Naive thymus-derived CD4-positive, alpha-beta T cell (primary cell): ENCODE measurements at regions of chr1 and their contacts with region 1.

Region 1: GRCh38 chr1:200302192-200302920 is 107.5 kb downstream of the ZNF281 start:
- DNase-seq: peak; percentile 57 to 81 (median 74)
- ATAC-seq: peak; percentile 97
- H3K4me3 ChIP-seq: peak overlapping the region; percentile 95
- H3K4me3 Mint-ChIP-seq: peak overlapping the region; percentile 84 to 95 (median 94)
- H3K27ac ChIP-seq: peak overlapping the region; percentile 74
- H3K27ac Mint-ChIP-seq: peak overlapping the region; percentile 59 to 97 (median 93)
- H3K4me1 ChIP-seq: peaks cover 12 to 15% of the 10 kb centered on the region in 2 donors
- H3K4me1 Mint-ChIP-seq: peaks cover 4 to 42% (median 22%) of the 10 kb centered on the region in 7 donors
- H3K27me3 ChIP-seq: no peaks in the 10 kb centered on the region
- H3K27me3 Mint-ChIP-seq: peaks cover 0 to 37% (median 0%) of the 10 kb centered on the region in 5 donors

Region 2: GRCh38 chr1:199353906-199354305 is 948.5 kb before region 1 on chr1:
- CTCF ChIA-PET with region 1: no interaction called
- POLR2A ChIA-PET with region 1: no interaction called
- intact Hi-C with region 1: no loop called
- DNase-seq: no peak
- ATAC-seq: no peak
- H3K4me3 ChIP-seq: no peak overlapping the region
- H3K4me3 Mint-ChIP-seq: no peak overlapping the region
- H3K27ac ChIP-seq: no peak overlapping the region
- H3K27ac Mint-ChIP-seq: no peak overlapping the region
- H3K4me1 ChIP-seq: no peaks in the 10 kb centered on the region
- H3K4me1 Mint-ChIP-seq: no peaks in the 10 kb centered on the region
- H3K27me3 ChIP-seq: no peaks in the 10 kb centered on the region
- H3K27me3 Mint-ChIP-seq: peaks cover 1 to 15% (median 4%) of the 10 kb centered on the region in 5 donors

Region 3: DNA sequence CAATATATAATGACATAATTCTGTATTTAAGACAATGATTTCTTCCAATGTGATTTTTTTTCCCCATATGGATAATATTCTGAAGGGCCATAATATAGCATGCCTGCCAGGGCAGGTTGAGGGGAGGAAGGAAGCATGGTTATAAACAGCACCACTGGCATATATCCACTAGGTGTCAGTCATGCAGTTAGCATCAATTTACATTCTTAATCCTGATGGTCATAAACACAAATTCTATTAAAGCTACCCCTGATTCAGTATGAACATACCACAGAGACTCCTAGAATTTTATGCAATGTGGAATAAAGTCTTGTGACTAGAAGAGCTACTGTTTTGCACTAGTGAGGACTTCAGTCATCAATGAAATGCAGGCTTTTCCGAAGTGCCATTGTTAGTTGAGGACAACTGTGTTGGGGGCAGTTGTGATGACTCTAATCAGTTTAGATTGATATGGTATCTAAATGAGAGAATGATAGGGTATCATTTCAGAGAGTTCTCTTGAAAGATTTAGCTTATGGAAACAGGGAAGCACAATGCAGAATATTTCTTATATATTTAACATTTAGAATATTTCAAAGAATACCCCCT is 617.6 kb before region 1 on chr1:
- CTCF ChIA-PET with region 1: interaction called, 3 read pairs
- POLR2A ChIA-PET with region 1: no interaction called
- intact Hi-C with region 1: loop called (anchors 1 to 2 kb)
- DNase-seq: peak in 7 of 9 donors; percentile 7 to 38 (median 28)
- ATAC-seq: peak; percentile 85
- H3K4me3 ChIP-seq: no peak overlapping the region
- H3K4me3 Mint-ChIP-seq: no peak overlapping the region
- H3K27ac ChIP-seq: no peak overlapping the region
- H3K27ac Mint-ChIP-seq: no peak overlapping the region
- H3K4me1 ChIP-seq: no peaks in the 10 kb centered on the region
- H3K4me1 Mint-ChIP-seq: no peaks in the 10 kb centered on the region
- H3K27me3 ChIP-seq: no peaks in the 10 kb centered on the region
- H3K27me3 Mint-ChIP-seq: peaks cover 7 to 33% (median 8%) of the 10 kb centered on the region in 5 donors

Region 4: DNA sequence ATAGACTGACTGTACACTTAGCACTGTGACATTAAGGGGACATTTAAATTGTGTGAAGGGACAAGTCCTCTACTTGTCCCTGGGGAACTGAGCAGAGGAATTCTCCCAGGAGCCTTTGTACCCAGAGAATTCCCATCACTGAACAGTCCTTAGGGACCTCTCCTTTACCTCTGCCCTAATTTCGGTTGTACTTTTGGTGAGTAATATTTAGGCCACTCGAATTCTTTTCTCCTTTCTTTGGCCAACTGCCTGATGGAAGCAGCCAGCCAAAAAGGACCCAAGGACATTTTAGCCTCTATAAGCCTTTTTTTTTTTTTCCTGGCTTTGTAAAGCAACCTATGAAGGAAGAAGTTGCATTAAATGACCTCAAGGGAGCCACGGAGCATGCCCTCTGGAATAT is 203.3 kb before region 1 on chr1:
- CTCF ChIA-PET with region 1: no interaction called
- POLR2A ChIA-PET with region 1: no interaction called
- intact Hi-C with region 1: loop called in 1 of 2 experiments (anchors 1 kb)
- DNase-seq: no peak
- ATAC-seq: no peak
- H3K4me3 ChIP-seq: no peak overlapping the region
- H3K4me3 Mint-ChIP-seq: no peak overlapping the region
- H3K27ac ChIP-seq: no peak overlapping the region
- H3K27ac Mint-ChIP-seq: no peak overlapping the region
- H3K4me1 ChIP-seq: no peaks in the 10 kb centered on the region
- H3K4me1 Mint-ChIP-seq: peaks cover 0 to 4% (median 0%) of the 10 kb centered on the region in 7 donors
- H3K27me3 ChIP-seq: no peaks in the 10 kb centered on the region
- H3K27me3 Mint-ChIP-seq: peaks cover 0 to 18% (median 0%) of the 10 kb centered on the region in 5 donors

Region 5: DNA sequence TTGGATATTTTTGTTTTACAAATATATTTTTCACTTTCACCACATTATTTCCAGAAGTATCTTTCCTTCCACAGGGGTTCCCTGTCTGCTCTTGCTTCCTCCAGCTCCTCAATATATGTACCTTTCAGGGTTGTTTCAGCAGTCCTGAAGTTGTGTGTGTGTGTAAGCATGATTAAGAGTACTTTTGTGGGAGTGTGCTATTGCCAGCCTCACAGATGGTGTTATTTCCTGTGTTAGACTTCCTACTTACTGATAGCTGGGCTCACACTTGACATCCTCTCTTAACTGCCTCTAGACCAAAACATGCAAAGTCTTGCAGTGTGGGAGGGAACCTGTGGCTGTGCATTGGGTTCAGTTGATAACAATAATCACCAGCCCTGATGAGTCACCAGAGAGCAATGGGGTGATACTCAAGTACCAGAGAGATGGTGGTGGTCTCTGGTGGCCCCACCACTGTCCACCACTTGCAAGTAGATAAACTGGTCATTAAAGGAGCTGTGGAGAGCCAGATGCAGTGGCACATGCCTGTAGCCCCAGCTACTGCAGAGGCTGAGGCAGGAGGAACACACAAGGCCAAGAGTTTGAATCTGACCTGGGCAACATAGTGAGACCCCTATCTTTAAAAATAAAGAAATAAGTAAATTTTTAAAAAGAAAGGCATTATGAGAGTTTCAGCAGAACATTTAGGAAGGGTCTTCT is 148.1 kb before region 1 on chr1:
- CTCF ChIA-PET with region 1: interaction called, 3 read pairs
- POLR2A ChIA-PET with region 1: interaction called, 3 read pairs
- intact Hi-C with region 1: loop called (anchors 5 kb)
- DNase-seq: peak in 8 of 9 donors; percentile 26 to 65 (median 50)
- ATAC-seq: peak; percentile 88
- H3K4me3 ChIP-seq: no peak overlapping the region
- H3K4me3 Mint-ChIP-seq: peak overlapping the region; percentile 45 to 87 (median 67)
- H3K27ac ChIP-seq: peak overlapping the region; percentile 64
- H3K27ac Mint-ChIP-seq: peak overlapping the region; percentile 74 to 99 (median 89)
- H3K4me1 ChIP-seq: peaks cover 27 to 30% of the 10 kb centered on the region in 2 donors
- H3K4me1 Mint-ChIP-seq: peaks cover 18 to 54% (median 29%) of the 10 kb centered on the region in 7 donors
- H3K27me3 ChIP-seq: no peaks in the 10 kb centered on the region
- H3K27me3 Mint-ChIP-seq: peaks cover 0 to 2% (median 0%) of the 10 kb centered on the region in 5 donors

Region 6: DNA sequence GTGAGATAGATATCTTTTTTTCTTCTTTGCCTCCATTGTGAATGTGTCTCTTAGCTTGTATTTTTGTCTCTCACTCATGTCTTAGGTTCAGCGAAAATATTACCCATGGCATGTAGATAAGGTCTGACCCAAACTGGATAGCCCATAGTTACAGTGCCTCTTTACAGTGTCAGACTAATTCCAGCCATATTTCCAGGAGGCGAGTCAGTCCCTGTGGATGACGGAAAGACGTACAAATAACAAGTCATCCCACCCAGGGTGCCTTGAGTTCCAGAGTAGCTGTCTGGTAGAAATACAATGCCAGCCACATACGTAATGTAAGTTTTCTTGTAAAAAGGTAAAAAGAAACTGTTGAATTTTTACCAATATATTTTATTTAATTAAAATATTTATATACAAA is 49.8 kb before region 1 on chr1:
- CTCF ChIA-PET with region 1: no interaction called
- POLR2A ChIA-PET with region 1: no interaction called
- intact Hi-C with region 1: no loop called
- DNase-seq: no peak
- ATAC-seq: no peak
- H3K4me3 ChIP-seq: no peak overlapping the region
- H3K4me3 Mint-ChIP-seq: no peak overlapping the region
- H3K27ac ChIP-seq: no peak overlapping the region
- H3K27ac Mint-ChIP-seq: no peak overlapping the region
- H3K4me1 ChIP-seq: no peaks in the 10 kb centered on the region
- H3K4me1 Mint-ChIP-seq: peaks cover 0 to 11% (median 0%) of the 10 kb centered on the region in 7 donors
- H3K27me3 ChIP-seq: no peaks in the 10 kb centered on the region
- H3K27me3 Mint-ChIP-seq: peaks cover 0 to 40% (median 4%) of the 10 kb centered on the region in 5 donors

Region 7: GRCh38 chr1:200279810-200280411 is 22.4 kb before region 1 on chr1:
- CTCF ChIA-PET with region 1: interaction called, 5 read pairs
- POLR2A ChIA-PET with region 1: no interaction called
- intact Hi-C with region 1: loop called (anchors 1 to 2 kb)
- DNase-seq: peak in 6 of 9 donors; percentile 7 to 31 (median 16)
- ATAC-seq: peak; percentile 40
- H3K4me3 ChIP-seq: no peak overlapping the region
- H3K4me3 Mint-ChIP-seq: no peak overlapping the region
- H3K27ac ChIP-seq: no peak overlapping the region
- H3K27ac Mint-ChIP-seq: no peak overlapping the region
- H3K4me1 ChIP-seq: no peaks in the 10 kb centered on the region
- H3K4me1 Mint-ChIP-seq: peaks cover 0 to 4% (median 0%) of the 10 kb centered on the region in 7 donors
- H3K27me3 ChIP-seq: no peaks in the 10 kb centered on the region
- H3K27me3 Mint-ChIP-seq: peaks cover 0 to 14% (median 0%) of the 10 kb centered on the region in 5 donors